A673 (cell line): ENCODE measurements at regions of chr18 and their contacts with region 1.

Region 1: GRCh38 chr18:3593904-3594661 is 144.1 kb downstream of the TGIF1 start:
- DNase-seq: peak; percentile 94
- H3K4me3 ChIP-seq: peak overlapping the region; percentile 41
- H3K27ac ChIP-seq: peak overlapping the region; percentile 94
- H3K4me1 ChIP-seq: peaks cover 51% of the 10 kb centered on the region
- H3K27me3 ChIP-seq: no peaks in the 10 kb centered on the region
- CTCF ChIP-seq: peak; percentile 75

Region 2: DNA sequence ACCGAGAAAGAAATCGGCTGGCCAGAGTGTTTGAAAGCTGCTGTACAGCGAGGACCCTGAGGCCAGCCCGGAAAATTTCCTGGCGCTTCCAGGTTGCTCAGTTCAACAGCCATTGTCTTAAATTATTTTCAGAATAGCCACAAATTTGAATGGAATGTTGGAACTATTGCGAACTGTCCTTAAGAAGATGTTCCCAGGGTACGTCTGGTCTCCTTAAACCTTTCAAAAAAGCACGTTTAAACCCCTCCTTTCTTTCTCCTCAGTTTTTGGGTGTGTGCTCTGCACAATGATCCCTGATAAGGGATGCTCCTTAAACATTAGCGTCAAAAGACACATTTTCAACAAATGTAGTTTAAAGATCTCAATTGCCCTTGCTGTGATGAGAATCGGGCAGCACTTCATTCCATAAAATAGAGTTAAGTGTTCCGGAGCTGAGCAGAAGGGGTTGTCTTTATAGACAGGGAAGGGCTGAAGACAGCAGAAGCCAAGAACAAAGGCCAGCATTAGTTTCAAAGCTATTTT is 566.7 kb before region 1 on chr18:
- CTCF ChIA-PET with region 1: no interaction called
- POLR2A ChIA-PET with region 1: interaction called, 16 read pairs
- intact Hi-C with region 1: no loop called
- DNase-seq: no peak
- H3K4me3 ChIP-seq: no peak overlapping the region
- H3K27ac ChIP-seq: no peak overlapping the region
- H3K4me1 ChIP-seq: no peaks in the 10 kb centered on the region
- H3K27me3 ChIP-seq: no peaks in the 10 kb centered on the region
- CTCF ChIP-seq: no peak

Region 3: DNA sequence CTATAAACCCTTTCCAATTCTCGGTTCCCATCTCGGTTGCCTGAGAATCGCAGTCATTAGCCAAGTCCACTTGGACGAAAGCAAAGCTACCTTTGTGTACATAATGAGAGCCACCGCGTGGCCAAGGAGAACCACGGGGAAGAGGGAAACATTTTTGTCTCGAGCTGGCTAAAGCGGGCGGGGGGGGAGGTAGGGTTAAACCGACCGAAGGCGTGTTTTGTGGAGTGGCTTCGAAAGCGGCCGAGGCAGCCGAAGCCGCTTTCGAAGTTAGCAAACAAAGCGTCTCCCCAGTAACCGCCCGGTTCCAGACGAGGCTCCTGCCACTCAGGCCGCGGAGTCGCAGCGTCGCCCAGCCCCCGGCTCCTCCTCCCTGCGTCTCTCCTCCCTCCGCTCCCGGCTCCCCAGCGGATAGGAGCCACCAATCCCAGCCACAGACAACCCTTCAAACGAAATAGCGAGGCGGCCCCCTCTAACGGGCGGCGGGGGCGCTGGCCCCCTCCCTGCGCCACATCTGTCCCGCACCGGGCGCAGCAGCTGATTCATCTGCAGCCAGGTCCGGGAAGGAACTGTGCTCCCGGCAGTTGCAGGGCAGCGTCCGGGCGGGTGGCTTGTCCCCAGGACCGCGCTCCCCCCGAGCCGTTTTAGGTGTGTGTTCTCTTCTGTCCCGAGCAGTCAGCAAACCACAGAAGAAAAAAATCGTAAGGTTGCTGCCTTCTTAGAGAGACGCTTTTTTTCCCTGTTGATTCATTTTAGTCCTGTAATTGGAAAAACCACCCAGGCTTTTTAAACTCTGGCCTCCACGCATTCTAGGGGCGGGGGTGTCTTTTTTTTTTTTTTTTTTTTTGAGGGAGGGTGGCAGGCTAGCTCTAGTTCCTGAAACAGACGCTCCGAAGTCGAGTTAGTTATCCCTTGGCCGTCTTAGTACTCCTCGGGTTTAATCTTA is 145.9 kb before region 1 on chr18:
- CTCF ChIA-PET with region 1: no interaction called
- POLR2A ChIA-PET with region 1: no interaction called
- intact Hi-C with region 1: loop called (anchors 2 kb)
- DNase-seq: peak; percentile 99
- H3K4me3 ChIP-seq: peak overlapping the region; percentile 91
- H3K27ac ChIP-seq: peak overlapping the region; percentile 96
- H3K4me1 ChIP-seq: peaks cover 23% of the 10 kb centered on the region
- H3K27me3 ChIP-seq: no peaks in the 10 kb centered on the region
- CTCF ChIP-seq: 0 out of 2 replicates have a peak, but pooled peaks have one; percentile 15

Region 4: GRCh38 chr18:3454365-3455089 is 139.6 kb before region 1 on chr18:
- CTCF ChIA-PET with region 1: interaction called, 11 read pairs
- POLR2A ChIA-PET with region 1: no interaction called
- intact Hi-C with region 1: loop called (anchors 2 kb)
- DNase-seq: peak; percentile 87
- H3K4me3 ChIP-seq: peak overlapping the region; percentile 91
- H3K27ac ChIP-seq: peak overlapping the region; percentile 96
- H3K4me1 ChIP-seq: peaks cover 38% of the 10 kb centered on the region
- H3K27me3 ChIP-seq: no peaks in the 10 kb centered on the region
- CTCF ChIP-seq: peak; percentile 78

Region 5: DNA sequence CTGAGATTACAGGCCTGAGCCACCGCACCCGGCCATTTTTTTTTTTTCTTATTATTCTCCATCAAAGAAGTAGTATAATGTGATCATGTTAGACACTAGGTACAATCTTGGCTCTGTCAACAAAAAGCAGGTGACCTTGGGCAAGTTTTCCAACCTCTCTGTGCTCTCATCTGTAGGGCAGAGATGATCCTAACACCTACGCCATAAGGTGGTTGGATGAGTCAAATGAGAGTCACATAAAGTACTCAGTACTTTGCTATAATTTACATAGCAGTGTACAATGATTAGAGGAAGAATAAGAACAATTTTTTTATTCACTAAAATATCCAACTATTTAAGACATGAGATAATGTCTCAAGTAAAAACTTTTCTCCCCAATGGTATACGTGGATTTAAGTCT is 15.5 kb before region 1 on chr18:
- CTCF ChIA-PET with region 1: no interaction called
- POLR2A ChIA-PET with region 1: no interaction called
- intact Hi-C with region 1: no loop called
- DNase-seq: no peak
- H3K4me3 ChIP-seq: no peak overlapping the region
- H3K27ac ChIP-seq: no peak overlapping the region
- H3K4me1 ChIP-seq: no peaks in the 10 kb centered on the region
- H3K27me3 ChIP-seq: no peaks in the 10 kb centered on the region
- CTCF ChIP-seq: no peak

Region 6: DNA sequence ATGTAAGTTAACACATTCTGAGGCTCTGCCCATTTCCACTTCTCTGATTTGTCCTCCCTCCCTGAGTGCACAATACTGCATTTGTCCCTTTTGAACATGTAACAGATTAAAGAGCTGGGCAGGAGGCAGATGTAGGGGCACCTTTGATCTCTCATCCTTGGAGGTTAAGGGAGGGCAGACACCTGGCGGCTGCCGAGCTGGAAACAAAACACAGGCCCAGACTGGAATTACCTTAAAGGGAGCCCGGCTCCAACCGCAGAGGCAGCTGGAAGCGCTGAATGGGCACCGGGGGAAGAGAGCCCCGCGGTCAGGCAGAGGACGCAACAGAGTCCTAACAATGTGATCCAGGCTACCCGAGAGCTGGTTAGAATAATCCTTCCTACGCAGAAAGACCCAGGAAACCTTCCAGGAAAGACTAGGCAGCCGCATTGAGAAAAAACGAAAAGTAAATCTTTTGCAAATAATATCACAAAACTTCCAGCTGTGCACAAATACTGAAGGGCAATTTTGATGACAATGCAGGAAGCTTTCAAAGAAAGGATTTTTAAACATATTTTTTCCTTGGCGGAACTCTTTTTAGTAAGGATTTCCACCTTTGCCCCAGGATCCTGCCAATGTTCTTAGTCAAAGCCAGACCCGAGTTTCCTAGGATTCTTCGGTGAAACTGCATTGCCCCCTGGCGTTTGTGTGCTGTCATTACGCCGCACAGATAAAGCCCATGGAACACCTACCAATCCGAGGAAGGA is 71.9 kb after region 1 on chr18:
- CTCF ChIA-PET with region 1: interaction called, 29 read pairs
- POLR2A ChIA-PET with region 1: interaction called, 5 read pairs
- intact Hi-C with region 1: loop called (anchors 2 kb)
- DNase-seq: peak; percentile 94
- H3K4me3 ChIP-seq: peak overlapping the region; percentile 21
- H3K27ac ChIP-seq: peak overlapping the region; percentile 88
- H3K4me1 ChIP-seq: peaks cover 54% of the 10 kb centered on the region
- H3K27me3 ChIP-seq: no peaks in the 10 kb centered on the region
- CTCF ChIP-seq: peak; percentile 96